Sigmoid colon (tissue), 7 donors: ENCODE measurements at regions of chr1 and their contacts with region 1.

Region 1: GRCh38 chr1:161225534-161226319 is at the start of gene TOMM40L:
- DNase-seq: peak; percentile 98
- H3K4me3 ChIP-seq: peak within 1 kb of the TSS; percentile 59 to 82 (median 78)
- H3K27ac ChIP-seq: peak within 1 kb of the TSS; percentile 82 to 89 (median 85)
- H3K4me1 ChIP-seq: peaks cover 0 to 31% (median 25%) of the 10 kb centered on the region in 4 donors
- H3K27me3 ChIP-seq: no peaks in the 10 kb centered on the region
- CTCF ChIP-seq: peak; percentile 41 to 59 (median 50)
- EP300 ChIP-seq: no peak
- POLR2A ChIP-seq: no peak
- total RNA-seq, gene TOMM40L: 12.6 to 20.2 (median 14.8) TPM

Region 2: DNA sequence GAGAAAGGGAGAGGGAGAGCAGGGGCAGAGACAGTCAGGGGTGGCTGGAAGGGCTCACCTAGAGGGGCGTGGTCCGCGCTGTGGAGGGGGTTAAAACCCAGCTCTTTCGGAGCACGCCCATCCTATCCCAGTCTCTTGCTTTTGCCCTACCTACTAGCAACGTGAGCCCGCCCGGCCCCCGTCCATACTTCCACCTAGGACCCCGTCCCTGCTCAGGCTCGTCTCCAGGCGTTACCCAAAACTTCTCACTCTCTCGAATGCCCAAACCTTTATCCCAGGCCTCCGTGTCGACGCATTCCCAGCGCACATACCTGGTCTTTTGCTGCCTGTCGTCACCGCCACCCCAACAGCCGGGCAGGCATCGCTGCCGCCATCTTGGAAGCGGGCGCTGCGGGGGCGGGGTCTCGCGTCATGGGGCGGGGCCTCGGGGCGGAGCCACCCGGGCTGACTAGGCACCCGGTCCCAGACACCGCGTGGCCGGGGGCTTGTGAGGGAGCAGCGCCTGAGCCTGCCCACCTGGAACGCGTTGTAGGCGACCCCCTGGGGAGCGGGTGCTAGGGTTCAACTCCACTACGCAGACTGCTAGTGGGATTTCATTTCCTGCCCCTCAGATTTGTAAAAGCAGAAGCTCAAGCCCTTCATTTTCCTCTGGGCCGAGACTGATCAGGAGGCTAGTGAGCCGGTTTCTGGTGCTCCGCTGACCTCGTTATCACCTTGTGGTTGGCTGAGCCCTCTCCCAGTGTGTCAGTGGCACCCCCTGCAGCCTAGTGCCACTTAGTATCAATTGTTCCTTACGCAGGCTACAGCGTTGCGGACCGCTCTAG is 48.4 kb before region 1 on chr1 and contains the start of gene B4GALT3:
- intact Hi-C with region 1: no loop called
- DNase-seq: peak; percentile 93
- H3K4me3 ChIP-seq: peak within 1 kb of the TSS; percentile 64 to 78 (median 76)
- H3K27ac ChIP-seq: peak within 1 kb of the TSS; percentile 85 to 92 (median 88)
- H3K4me1 ChIP-seq: peaks cover 0 to 38% (median 24%) of the 10 kb centered on the region in 4 donors
- H3K27me3 ChIP-seq: no peaks in the 10 kb centered on the region
- CTCF ChIP-seq: peak in 1 of 4 experiments; percentile 7
- EP300 ChIP-seq: no peak
- POLR2A ChIP-seq: peak; percentile 67 to 71
- total RNA-seq, gene B4GALT3: 10.7 to 19.3 (median 14.8) TPM

Region 3: DNA sequence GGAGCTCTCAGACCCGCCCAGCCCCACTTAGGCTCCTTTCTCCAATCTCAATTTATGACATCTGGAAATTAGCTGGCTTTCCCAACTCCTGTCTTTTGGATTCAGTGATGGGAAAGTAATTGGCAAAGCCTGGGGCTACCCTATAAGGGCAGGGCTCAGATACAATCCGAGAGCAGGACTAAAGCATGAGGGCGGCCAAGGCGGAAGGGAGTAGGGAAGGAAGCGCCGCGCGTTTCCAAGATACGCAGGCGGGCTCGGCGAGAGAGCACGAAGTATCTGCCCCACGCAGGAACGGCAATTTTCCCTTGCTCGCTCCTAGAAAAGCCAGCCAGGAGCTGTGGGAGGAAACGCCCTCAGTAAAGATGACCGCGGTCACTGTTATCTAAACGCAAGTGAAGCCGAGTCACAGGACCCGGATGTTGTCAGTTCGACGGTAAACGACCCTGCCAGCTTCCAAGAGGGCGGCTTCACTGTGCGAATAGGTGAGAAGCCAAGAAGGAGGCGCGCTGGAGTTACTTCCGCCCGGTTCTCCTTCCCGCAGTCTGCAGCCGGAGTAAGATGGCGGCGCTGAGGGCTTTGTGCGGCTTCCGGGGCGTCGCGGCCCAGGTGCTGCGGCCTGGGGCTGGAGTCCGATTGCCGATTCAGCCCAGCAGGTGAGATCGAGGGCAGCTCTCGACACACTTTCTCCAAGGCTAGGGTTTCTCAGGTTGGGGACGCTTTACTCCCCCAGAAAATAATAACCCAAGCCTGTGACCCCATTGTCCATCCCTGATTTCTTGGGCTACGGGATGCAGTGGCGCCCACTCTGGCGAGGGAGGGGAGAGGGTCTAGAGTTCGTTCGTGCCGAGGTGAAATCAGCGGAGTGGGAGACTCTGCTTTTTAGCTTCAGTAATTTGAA is 23.6 kb before region 1 on chr1 and contains the start of gene NDUFS2:
- intact Hi-C with region 1: loop called (anchors 1 kb)
- DNase-seq: peak; percentile 100
- H3K4me3 ChIP-seq: peak within 1 kb of the TSS; percentile 75 to 83 (median 78)
- H3K27ac ChIP-seq: peak within 1 kb of the TSS; percentile 94 to 97 (median 96)
- H3K4me1 ChIP-seq: peaks cover 0 to 83% (median 74%) of the 10 kb centered on the region in 4 donors
- H3K27me3 ChIP-seq: no peaks in the 10 kb centered on the region
- CTCF ChIP-seq: no peak
- EP300 ChIP-seq: peak in 1 of 4 donors; percentile 4
- POLR2A ChIP-seq: peak; percentile 60 to 81
- total RNA-seq, gene NDUFS2: 79.6 to 113 (median 92.6) TPM

Region 4: GRCh38 chr1:161209790-161210409 is 15.8 kb before region 1 on chr1:
- intact Hi-C with region 1: loop called (anchors 2 kb)
- DNase-seq: peak; percentile 89
- H3K4me3 ChIP-seq: no peak overlapping the region
- H3K27ac ChIP-seq: peak overlapping the region; percentile 46 to 96 (median 74)
- H3K4me1 ChIP-seq: peaks cover 0 to 36% (median 21%) of the 10 kb centered on the region in 4 donors
- H3K27me3 ChIP-seq: no peaks in the 10 kb centered on the region
- CTCF ChIP-seq: peak; percentile 72 to 94 (median 87)
- EP300 ChIP-seq: no peak
- POLR2A ChIP-seq: no peak

Region 5: DNA sequence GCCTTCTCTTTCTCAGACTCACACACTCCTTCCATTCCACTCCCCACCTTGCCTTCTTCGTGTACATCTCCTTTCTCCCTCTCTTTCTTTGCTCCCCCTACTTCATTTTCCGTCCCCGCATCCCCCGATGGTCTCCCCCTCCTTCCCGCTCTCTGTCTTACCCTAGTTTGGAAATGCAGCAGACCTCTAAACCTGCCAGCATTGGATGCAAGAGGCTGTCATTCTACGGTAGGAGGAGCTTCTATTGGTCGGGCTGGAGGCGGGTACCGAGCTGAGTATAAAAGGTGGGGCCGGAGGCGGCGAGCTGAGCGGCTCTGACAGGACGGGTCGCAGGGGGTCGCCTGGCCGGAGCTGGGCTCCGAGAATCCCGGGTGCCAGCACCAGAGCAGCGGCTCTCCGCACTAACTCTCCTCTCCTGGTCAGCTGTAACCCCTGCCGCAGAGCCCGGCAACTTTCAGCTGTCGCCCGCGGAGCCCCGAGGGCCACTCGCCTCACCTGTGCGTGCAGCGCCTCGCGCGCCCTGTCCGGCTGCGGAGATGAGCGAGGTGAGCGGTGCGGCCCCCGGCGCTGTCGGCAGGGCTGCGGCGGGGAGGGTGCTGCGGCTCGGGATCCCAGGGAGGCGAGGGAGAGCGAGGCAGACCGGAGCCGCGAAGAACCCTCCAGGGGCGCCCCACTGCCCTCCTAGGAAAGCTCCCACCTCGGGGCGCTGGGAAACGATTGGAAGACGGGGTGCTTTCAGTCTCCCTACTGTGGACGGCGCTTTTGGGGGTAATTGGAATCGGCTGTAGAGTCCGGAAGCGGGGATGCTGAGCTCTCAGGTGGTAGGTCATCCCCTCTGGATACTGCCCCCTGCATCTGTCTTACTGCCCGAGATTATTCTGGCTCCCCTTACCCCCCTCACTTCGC is 33.0 kb after region 1 on chr1 and contains the start of gene PCP4L1:
- intact Hi-C with region 1: no loop called
- DNase-seq: peak; percentile 84
- H3K4me3 ChIP-seq: peak within 1 kb of the TSS; percentile 45 to 60 (median 54)
- H3K27ac ChIP-seq: peak within 1 kb of the TSS; percentile 44 to 69 (median 55)
- H3K4me1 ChIP-seq: peaks cover 0 to 26% (median 12%) of the 10 kb centered on the region in 4 donors
- H3K27me3 ChIP-seq: peaks cover 0 to 34% (median 25%) of the 10 kb centered on the region in 3 donors
- CTCF ChIP-seq: no peak
- EP300 ChIP-seq: no peak
- POLR2A ChIP-seq: no peak
- total RNA-seq, gene PCP4L1: 0.71 to 15.2 (median 3.7) TPM

Region 6: GRCh38 chr1:161274874-161275273 is 49.1 kb after region 1 on chr1:
- intact Hi-C with region 1: no loop called
- DNase-seq: no peak
- H3K4me3 ChIP-seq: no peak overlapping the region
- H3K27ac ChIP-seq: no peak overlapping the region
- H3K4me1 ChIP-seq: peaks cover 0 to 16% (median 7%) of the 10 kb centered on the region in 4 donors
- H3K27me3 ChIP-seq: no peaks in the 10 kb centered on the region
- CTCF ChIP-seq: no peak
- EP300 ChIP-seq: no peak
- POLR2A ChIP-seq: no peak

Region 7: DNA sequence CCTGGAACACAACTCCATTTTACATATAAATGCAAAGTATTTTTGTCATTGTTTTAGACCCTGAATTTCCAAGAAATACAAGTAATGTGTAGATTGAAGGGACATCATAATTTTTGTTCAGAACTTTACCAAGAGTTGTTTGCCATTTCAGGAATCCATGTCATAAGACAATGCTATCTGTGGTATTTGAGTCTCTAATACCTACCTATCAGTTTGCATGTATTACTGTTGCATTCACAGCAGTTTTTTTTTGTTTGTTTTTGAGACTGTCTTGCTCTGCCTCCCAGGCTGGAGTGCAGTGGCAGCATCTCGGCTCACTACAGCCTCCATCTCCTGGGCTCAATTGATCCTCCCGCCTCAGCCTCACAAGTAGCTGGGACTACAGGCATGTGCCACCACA is 66.9 kb after region 1 on chr1:
- intact Hi-C with region 1: loop called (anchors 2 kb)
- DNase-seq: no peak
- H3K4me3 ChIP-seq: no peak overlapping the region
- H3K27ac ChIP-seq: no peak overlapping the region
- H3K4me1 ChIP-seq: no peaks in the 10 kb centered on the region
- H3K27me3 ChIP-seq: no peaks in the 10 kb centered on the region
- CTCF ChIP-seq: no peak
- EP300 ChIP-seq: no peak
- POLR2A ChIP-seq: no peak

Region 8: DNA sequence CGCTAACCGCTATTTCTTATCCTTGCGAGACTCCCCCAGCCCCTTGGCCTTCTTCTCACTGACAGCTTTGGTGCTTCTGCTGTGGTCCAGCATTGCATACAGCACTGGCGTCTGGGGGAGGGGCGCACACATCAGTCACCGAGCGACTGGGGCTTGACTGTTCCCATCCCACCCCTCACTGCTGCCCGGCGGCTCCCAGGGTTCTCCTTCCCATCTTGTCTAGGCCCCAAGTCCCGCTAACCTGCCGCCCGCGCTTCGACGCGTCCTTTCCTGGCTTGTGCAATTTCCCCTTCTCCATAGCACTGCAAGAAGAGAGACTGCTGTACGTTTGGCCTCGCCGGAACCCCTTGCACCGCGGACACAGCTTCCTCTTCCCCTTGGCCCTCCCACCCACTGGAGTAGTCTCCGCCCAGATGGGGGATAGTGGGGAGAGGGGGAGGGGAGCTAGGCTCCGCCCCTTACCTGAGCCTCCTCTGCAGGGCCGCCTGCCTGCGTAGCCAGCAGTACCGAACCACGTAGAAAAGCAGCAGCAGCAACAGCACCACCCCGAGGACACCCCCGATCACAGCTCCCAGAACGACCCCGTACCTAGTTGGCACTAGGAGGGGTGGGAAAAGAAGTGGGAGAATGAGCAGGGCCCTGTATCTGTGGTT is 80.3 kb after region 1 on chr1:
- intact Hi-C with region 1: loop called (anchors 5 kb)
- DNase-seq: peak; percentile 90
- H3K4me3 ChIP-seq: peak overlapping the region; percentile 49 to 69 (median 60)
- H3K27ac ChIP-seq: peak overlapping the region; percentile 37 to 65 (median 55)
- H3K4me1 ChIP-seq: peaks cover 0 to 26% (median 17%) of the 10 kb centered on the region in 4 donors
- H3K27me3 ChIP-seq: no peaks in the 10 kb centered on the region
- CTCF ChIP-seq: no peak
- EP300 ChIP-seq: no peak
- POLR2A ChIP-seq: no peak

Region 9: DNA sequence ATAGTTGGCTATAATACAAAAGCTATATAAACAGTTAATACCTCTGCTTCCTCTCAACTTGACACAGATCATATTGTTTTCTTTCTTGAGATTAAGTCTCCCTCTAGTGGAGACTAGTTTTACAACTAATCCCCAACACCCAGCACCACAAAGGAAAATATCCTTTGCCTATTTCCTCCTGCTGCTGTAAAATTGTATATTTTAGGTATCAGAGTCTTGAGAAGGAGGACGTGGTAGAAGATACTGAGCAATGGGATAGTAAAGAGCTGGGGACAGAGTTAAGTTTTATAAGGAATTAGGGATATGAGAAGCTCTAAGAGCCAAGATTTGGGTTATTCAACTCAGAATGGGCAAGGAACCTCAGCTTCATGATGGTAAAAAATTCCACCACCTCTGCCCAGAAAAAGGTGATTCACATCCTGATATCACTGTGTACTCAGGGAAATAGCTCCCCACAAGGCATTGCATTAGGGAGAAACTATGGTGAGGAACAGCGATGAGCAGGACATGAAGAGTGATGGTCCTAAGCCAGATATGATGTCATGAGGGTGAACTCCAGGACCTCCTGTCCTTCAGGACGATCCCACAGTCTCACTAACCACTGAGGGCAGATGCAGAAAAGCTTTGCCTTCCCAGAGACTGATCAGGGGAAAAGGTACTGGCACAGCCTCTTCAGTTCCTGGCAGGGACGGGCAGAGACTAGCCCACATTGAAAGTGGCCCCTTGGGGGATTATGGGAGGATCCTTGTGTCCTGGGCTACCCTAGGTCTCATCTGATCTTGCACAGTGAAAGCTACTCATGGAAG is 156.7 kb after region 1 on chr1:
- intact Hi-C with region 1: loop called (anchors 2 kb)
- DNase-seq: no peak
- H3K4me3 ChIP-seq: no peak overlapping the region
- H3K27ac ChIP-seq: peak overlapping the region; percentile 48 to 81 (median 65)
- H3K4me1 ChIP-seq: peaks cover 0 to 16% (median 9%) of the 10 kb centered on the region in 4 donors
- H3K27me3 ChIP-seq: no peaks in the 10 kb centered on the region
- CTCF ChIP-seq: peak; percentile 62 to 73 (median 66)
- EP300 ChIP-seq: peak in 1 of 4 donors; percentile 16
- POLR2A ChIP-seq: no peak